AG04449 (cell line): ENCODE measurements at regions of chr15 and their contacts with region 1.

Region 1: GRCh38 chr15:63600616-63601025 is 3.4 kb downstream of the FBXL22 start:
- DNase-seq: peak; percentile 23
- H3K4me3 ChIP-seq: peak overlapping the region; percentile 76
- CTCF ChIP-seq: no peak

Region 2: DNA sequence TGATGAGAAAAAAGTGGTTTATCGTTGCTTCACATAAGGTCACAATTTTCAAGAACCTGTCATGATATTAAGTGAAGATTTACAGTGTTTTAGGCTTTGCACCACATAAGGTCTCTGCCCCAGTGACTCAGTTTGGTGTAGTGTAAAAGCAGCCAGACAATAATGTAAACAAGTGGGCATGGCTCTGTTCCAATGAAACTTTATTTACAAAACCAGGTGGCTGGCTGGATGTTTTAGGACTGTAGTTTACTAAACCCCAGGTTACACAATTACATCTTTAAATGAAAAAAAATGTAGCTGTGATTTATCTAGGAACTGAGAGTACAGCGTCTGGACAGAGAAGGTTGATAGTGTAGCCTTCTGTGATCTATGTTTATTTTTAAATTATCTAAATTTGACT is 13.1 kb before region 1 on chr15:
- CTCF ChIA-PET with region 1: interaction called, 18 read pairs
- POLR2A ChIA-PET with region 1: interaction called, 3 read pairs
- DNase-seq: no peak
- H3K4me3 ChIP-seq: no peak overlapping the region
- CTCF ChIP-seq: no peak